Activated naive CD4-positive, alpha-beta T cell treated with anti-CD3 and anti-CD28 coated beads for 36 hours (primary cell): ENCODE measurements at regions of chr1 and their contacts with region 1.

Region 1: DNA sequence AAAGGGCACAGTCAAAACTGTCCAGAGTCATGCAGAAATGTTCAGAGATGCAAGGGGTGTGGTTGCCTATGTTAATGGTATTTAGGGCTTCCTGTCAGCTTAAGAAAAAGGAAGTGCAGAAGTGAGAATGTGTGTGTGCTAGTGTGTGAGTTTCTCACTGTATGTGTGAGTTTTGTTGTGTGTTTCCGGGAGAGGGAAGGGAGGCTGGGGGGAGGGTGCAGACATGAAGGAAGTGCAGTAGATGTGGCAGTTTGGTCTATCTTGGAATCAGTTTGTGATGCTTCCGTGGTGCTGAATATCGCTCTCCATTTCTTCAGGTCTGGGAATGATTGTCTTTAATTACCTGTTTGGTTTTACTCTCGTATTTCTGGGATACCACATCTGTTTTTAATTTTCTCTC is 16.5 kb upstream of the ATP6V1G3 start:
- DNase-seq: peak; percentile 85
- H3K4me3 Mint-ChIP-seq: peak overlapping the region; percentile 73
- H3K27ac Mint-ChIP-seq: peak overlapping the region; percentile 85
- H3K4me1 Mint-ChIP-seq: peaks cover 81% of the 10 kb centered on the region
- H3K27me3 Mint-ChIP-seq: no peaks in the 10 kb centered on the region

Region 2: DNA sequence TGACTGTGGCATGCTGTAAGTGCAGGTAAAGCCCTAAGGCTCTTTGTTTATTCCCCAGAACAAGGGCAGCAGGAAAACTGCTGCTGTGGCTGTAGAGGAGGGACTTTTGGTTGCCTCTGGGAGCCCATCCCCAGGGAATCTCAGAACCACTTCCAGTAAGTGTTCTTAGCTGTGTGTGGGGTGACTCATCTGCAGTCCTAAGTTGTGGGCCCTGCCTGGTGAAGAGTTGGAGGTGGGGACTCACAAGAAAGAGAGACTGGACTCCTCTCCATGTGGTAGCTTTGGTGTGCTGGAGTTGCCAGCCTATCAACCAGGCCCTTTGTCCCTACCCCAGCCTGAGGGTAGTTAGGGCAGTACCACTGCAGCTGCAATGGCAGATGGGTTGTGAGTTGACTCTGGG is 757.7 kb before region 1 on chr1:
- CTCF ChIA-PET with region 1: no interaction called
- intact Hi-C with region 1: no loop called
- DNase-seq: no peak
- H3K4me3 Mint-ChIP-seq: no peak overlapping the region
- H3K27ac Mint-ChIP-seq: no peak overlapping the region
- H3K4me1 Mint-ChIP-seq: no peaks in the 10 kb centered on the region
- H3K27me3 Mint-ChIP-seq: peaks cover 2% of the 10 kb centered on the region

Region 3: DNA sequence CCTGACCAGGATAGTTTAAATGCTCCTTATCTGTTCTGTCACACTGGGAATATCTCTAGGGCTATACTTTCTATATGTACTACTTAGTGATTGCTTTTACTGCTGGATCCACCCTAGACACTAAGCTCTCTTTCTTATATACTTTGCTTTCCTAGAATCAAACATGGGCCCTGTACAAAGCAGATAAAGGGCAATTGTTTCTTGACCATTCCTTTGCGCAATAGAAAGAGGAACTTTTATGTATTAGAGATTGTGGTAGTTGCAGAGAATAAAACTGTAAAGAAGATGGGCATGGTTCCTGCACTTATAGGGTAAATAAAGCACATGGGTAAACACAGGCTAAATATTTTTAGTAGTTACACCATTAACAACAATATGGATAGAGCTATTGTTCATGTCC is 75.3 kb before region 1 on chr1:
- CTCF ChIA-PET with region 1: no interaction called
- intact Hi-C with region 1: no loop called
- DNase-seq: no peak
- H3K4me3 Mint-ChIP-seq: no peak overlapping the region
- H3K27ac Mint-ChIP-seq: no peak overlapping the region
- H3K4me1 Mint-ChIP-seq: no peaks in the 10 kb centered on the region
- H3K27me3 Mint-ChIP-seq: no peaks in the 10 kb centered on the region

Region 4: GRCh38 chr1:198534548-198535418 is 22.2 kb before region 1 on chr1:
- CTCF ChIA-PET with region 1: interaction called, 3 read pairs
- intact Hi-C with region 1: loop called (anchors 1 kb)
- DNase-seq: no peak
- H3K4me3 Mint-ChIP-seq: peak overlapping the region; percentile 62
- H3K27ac Mint-ChIP-seq: peak overlapping the region; percentile 78
- H3K4me1 Mint-ChIP-seq: peaks cover 82% of the 10 kb centered on the region
- H3K27me3 Mint-ChIP-seq: no peaks in the 10 kb centered on the region

Region 5: DNA sequence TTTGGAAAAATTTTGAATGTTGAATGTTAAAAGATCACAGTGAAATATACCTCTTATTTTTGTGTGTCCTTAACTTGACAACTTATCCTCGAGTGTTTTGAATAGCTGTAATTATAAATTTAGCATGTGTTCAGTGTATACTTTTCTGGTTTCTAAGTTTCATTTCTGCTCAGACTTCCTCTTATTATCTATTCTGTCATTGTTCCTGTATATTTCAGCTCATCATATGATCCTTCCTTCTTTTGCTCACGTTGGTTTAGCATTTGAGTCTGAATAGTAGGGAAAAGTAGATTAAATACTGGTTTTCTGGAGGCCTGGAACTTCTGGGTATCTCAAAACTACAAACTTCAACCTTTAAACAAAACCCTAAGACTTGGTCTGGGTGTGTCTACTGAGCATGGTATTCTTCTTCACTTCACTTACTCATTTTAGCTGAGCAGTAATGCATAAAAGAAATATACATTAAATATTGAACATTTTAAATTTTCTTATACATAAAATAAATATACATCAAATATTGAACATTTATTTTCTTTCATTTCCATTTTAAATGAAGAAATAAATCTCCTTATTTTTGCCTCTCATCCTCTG is 13.2 kb before region 1 on chr1:
- CTCF ChIA-PET with region 1: interaction called, 5 read pairs
- intact Hi-C with region 1: loop called (anchors 1 kb)
- DNase-seq: no peak
- H3K4me3 Mint-ChIP-seq: peak overlapping the region; percentile 33
- H3K27ac Mint-ChIP-seq: peak overlapping the region; percentile 76
- H3K4me1 Mint-ChIP-seq: peaks cover 53% of the 10 kb centered on the region
- H3K27me3 Mint-ChIP-seq: no peaks in the 10 kb centered on the region

Region 6: DNA sequence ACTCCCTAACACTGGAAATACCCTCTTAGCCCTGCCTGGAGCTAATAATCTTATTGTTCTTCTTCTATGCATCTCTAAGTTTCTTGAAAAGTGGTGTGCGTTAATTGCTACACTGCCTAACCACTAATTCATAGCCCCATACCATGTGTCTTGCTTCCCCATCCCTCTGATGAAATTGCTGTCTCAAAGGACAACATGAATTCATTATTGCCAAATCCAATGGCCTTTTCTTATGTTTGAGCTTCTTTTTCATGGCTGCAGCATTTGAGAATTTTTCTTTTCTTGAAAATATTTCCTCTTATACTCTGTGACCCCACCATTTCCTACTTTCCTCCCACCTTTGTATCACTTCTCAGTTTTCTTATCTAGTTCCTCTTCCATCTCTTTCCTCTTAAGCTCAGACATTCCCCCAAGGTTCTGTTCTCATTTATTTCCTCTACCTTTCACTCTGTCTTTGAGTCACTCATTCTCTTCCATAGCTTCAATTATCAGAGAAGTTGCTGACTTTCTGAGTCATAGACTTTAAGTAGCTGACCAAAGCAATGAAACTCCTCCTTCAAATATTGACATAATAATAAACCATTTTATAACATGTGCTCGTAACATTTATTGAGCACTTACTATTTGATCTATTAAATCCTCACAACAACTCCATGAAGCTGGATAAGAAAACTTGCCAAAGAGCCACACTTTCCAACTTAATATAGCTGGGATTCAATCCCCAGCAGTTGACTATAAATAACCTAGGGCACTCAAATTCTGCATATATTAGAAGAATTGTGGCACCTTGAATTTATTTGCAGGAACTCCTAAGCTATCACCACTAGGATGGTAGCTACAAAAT is 19.0 kb after region 1 on chr1:
- CTCF ChIA-PET with region 1: interaction called, 6 read pairs
- intact Hi-C with region 1: loop called (anchors 1 kb)
- DNase-seq: no peak
- H3K4me3 Mint-ChIP-seq: no peak overlapping the region
- H3K27ac Mint-ChIP-seq: no peak overlapping the region
- H3K4me1 Mint-ChIP-seq: peaks cover 22% of the 10 kb centered on the region
- H3K27me3 Mint-ChIP-seq: no peaks in the 10 kb centered on the region